ENCODE measurements at regions of chr6 and their contacts with region 1.

Region 1: DNA sequence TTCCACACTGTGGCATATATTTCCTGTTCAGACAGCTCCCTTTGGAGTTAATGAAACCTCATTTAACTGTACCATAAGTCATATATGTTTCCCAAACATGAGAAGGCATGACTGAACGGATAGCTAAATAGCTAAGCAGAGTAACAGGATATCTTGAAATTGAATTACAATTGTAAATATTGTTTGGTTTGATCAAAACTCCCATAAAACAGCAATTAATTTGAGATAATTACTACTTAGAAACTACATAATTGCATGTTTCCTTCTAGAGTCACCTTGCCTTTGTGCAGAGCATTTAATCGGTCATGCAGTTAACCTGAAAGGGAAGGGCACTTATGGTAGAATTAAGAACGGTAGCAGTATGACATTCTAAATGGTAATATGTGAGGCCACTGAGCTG is 179.0 kb upstream of the MAP3K7 start:
- DNase-seq: no peak
- H3K4me3 ChIP-seq: no peak overlapping the region
- H3K27ac ChIP-seq: no peak overlapping the region
- H3K4me1 ChIP-seq: no peaks in the 10 kb centered on the region
- H3K27me3 ChIP-seq: peaks cover 78% of the 10 kb centered on the region
- CTCF ChIP-seq: no peak

Region 2: DNA sequence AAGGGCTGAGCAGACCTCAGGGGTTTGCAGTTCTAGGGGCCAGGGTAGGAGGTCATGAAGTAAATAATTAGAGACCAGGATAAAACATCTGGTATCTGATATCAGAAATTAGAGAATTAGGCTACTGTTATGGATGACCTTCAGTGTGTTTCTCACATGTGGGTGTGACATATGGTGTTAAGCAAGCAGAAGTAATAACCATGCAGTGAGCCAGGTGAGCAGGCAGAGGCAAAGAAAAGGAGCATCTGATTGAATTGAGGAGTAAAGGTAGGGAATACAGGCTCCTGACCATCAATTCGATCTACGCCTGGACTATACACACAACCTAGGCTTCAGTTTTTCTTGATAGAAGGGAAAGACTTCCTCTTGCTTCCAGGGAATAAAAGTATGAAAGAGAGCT is 144.3 kb before region 1 on chr6:
- CTCF ChIA-PET with region 1: no interaction called
- POLR2A ChIA-PET with region 1: interaction called, 18 read pairs
- intact Hi-C with region 1: no loop called
- DNase-seq: no peak
- H3K4me3 ChIP-seq: no peak overlapping the region
- H3K27ac ChIP-seq: no peak overlapping the region
- H3K4me1 ChIP-seq: no peaks in the 10 kb centered on the region
- H3K27me3 ChIP-seq: peaks cover 20% of the 10 kb centered on the region
- CTCF ChIP-seq: no peak

Region 3: GRCh38 chr6:90739340-90739739 is 26.6 kb before region 1 on chr6:
- CTCF ChIA-PET with region 1: no interaction called
- POLR2A ChIA-PET with region 1: no interaction called
- intact Hi-C with region 1: no loop called
- DNase-seq: no peak
- H3K4me3 ChIP-seq: no peak overlapping the region
- H3K27ac ChIP-seq: no peak overlapping the region
- H3K4me1 ChIP-seq: no peaks in the 10 kb centered on the region
- H3K27me3 ChIP-seq: peaks cover 39% of the 10 kb centered on the region
- CTCF ChIP-seq: no peak

Measured in A673 (cell line).